Calu3 (cell line): ENCODE measurements at regions of chr19 and their contacts with region 1.

Region 1: GRCh38 chr19:46513461-46514236 is 18.0 kb upstream of the PNMA8B start:
- DNase-seq: peak; percentile 90
- H3K4me3 Mint-ChIP-seq: no peak overlapping the region
- H3K27ac Mint-ChIP-seq: no peak overlapping the region
- H3K4me1 Mint-ChIP-seq: peaks cover 8% of the 10 kb centered on the region
- H3K27me3 Mint-ChIP-seq: peaks cover 53% of the 10 kb centered on the region
- CTCF ChIP-seq: peak; percentile 98

Region 2: GRCh38 chr19:46288896-46289588 is 224.6 kb before region 1 on chr19:
- CTCF ChIA-PET with region 1: no interaction called
- intact Hi-C with region 1: loop called (anchors 10 kb)
- DNase-seq: no peak
- H3K4me3 Mint-ChIP-seq: no peak overlapping the region
- H3K27ac Mint-ChIP-seq: no peak overlapping the region
- H3K4me1 Mint-ChIP-seq: no peaks in the 10 kb centered on the region
- H3K27me3 Mint-ChIP-seq: peaks cover 11% of the 10 kb centered on the region
- CTCF ChIP-seq: no peak

Region 3: GRCh38 chr19:46392243-46392801 is 121.3 kb before region 1 on chr19:
- CTCF ChIA-PET with region 1: interaction called, 10 read pairs
- intact Hi-C with region 1: loop called (anchors 2 kb)
- DNase-seq: no peak
- H3K4me3 Mint-ChIP-seq: no peak overlapping the region
- H3K27ac Mint-ChIP-seq: no peak overlapping the region
- H3K4me1 Mint-ChIP-seq: no peaks in the 10 kb centered on the region
- H3K27me3 Mint-ChIP-seq: no peaks in the 10 kb centered on the region
- CTCF ChIP-seq: no peak

Region 4: DNA sequence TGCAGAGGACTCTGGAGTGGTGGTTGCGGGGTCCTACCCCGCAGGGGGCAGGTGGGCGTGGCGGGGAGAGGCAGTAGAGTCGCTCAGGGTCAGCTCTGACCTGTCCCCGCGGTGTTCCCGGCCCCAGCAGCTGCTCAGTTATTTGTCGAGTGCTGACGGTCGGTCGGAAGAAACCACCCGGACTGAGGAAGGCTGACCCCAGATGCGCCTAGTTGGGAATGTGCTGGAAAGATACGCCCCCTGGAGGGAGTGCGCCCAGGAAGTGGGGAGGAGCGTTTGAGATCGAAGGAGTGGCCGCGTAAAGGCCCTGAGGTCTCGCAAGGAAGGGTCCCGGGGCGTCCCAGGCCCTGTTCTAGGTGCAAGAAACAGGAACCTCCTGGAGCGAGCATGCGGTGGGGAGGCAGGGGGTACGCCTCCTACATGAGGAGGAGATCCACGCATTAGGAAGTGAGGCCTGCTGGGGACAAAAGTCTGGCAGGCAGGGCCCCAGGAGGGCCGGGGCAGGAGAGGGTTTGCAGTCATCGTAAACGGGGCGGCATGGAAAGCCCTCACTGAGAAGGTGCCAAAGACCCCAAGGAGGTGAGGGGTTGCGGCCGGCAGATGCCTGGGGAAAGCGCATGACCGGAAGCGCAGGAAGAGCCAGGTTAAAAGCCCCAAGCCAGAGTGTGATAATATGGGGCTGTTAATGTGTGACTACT is 109.4 kb before region 1 on chr19:
- CTCF ChIA-PET with region 1: no interaction called
- intact Hi-C with region 1: loop called (anchors 2 kb)
- DNase-seq: peak; percentile 64
- H3K4me3 Mint-ChIP-seq: peak overlapping the region; percentile 80
- H3K27ac Mint-ChIP-seq: peak overlapping the region; percentile 78
- H3K4me1 Mint-ChIP-seq: peaks cover 28% of the 10 kb centered on the region
- H3K27me3 Mint-ChIP-seq: peaks cover 36% of the 10 kb centered on the region
- CTCF ChIP-seq: peak; percentile 46

Region 5: DNA sequence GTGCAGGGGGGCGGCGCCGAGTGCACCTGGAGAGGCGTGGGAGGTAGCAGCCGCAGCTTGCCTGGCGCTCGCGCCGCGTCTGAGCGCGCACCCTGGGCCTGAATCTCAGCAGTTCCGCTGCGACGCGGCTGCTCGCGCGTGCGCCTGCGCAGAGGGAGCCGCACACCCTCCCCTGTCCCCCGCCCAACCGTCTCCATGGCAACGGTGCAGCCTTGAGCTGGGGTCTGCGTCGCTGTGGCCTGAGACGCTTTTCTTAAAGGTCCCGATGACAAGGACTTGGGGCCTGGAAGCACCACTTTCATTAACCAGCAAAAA is 17.9 kb before region 1 on chr19 and contains the start of gene PNMA8B:
- CTCF ChIA-PET with region 1: interaction called, 18 read pairs
- intact Hi-C with region 1: no loop called
- DNase-seq: no peak
- H3K4me3 Mint-ChIP-seq: no peak within 1 kb of the TSS
- H3K27ac Mint-ChIP-seq: no peak within 1 kb of the TSS
- H3K4me1 Mint-ChIP-seq: peaks cover 18% of the 10 kb centered on the region
- H3K27me3 Mint-ChIP-seq: peaks cover 43% of the 10 kb centered on the region
- CTCF ChIP-seq: no peak
- total RNA-seq, gene PNMA8B: not detected in 2 replicates

Region 6: DNA sequence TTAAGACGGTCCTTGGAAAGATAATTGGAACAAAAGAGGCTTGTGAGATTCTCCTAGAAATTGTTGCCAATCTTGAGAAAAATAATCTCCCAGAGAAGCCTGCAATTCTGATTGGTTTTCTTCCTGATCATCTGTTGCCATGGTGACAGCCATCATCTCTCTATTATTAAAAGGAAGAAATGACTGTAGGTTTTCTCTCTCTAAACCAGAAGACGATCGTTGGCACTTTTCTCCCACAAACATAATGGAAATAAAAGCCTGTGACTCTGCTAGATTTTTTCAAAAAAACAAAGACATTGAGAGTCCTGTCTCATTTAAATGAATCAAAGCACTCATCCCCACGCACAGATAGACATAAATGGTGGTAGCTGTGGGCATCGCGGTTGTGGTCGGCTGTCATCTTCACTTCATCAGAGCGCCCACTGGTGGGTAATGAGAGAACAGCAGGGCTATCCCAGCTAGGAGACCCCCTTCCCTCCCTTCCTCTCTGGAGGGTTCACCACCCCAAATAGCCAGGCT is 65.8 kb after region 1 on chr19:
- CTCF ChIA-PET with region 1: no interaction called
- intact Hi-C with region 1: no loop called
- DNase-seq: no peak
- H3K4me3 Mint-ChIP-seq: no peak overlapping the region
- H3K27ac Mint-ChIP-seq: peak overlapping the region; percentile 22
- H3K4me1 Mint-ChIP-seq: peaks cover 3% of the 10 kb centered on the region
- H3K27me3 Mint-ChIP-seq: peaks cover 39% of the 10 kb centered on the region
- CTCF ChIP-seq: no peak